IMR-90 (cell line): ENCODE measurements at regions of chr13 and their contacts with region 1.

Region 1: GRCh38 chr13:24220086-24220703 is 59.7 kb downstream of the SPATA13 start:
- DNase-seq: peak; percentile 88
- ATAC-seq: peak; percentile 82
- H3K4me3 ChIP-seq: no peak overlapping the region
- H3K27ac ChIP-seq: no peak overlapping the region
- H3K4me1 ChIP-seq: peaks cover 13% of the 10 kb centered on the region
- H3K27me3 ChIP-seq: no peaks in the 10 kb centered on the region
- CTCF ChIP-seq: peak; percentile 88
- POLR2A ChIP-seq: no peak
- RAD21 ChIP-seq: peak; percentile 95

Region 2: DNA sequence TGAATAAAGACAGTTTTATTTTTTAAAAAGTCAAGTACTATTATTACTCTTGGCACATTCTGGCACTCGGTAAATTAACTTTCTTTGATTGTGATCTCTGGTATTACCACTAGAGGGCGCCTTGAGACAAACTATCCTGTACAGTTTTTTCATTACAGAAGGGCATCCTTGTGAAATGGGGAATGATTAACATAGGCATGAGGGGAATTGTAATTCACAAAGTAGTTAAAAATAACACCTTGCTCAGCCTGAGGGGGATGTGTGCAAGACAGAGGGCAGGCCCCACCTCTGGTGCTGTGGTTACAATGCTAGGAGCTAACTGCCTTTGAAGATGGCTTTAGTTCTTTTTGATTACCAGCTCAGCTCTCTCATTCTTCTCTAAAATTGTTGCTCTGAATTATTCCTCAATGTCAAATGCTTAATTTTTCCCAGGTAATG is 298.7 kb before region 1 on chr13:
- CTCF ChIA-PET with region 1: no interaction called
- POLR2A ChIA-PET with region 1: no interaction called
- dilution Hi-C with region 1: no loop called
- in situ Hi-C with region 1: no loop called
- intact Hi-C with region 1: loop called (anchors 1 kb)
- DNase-seq: peak; percentile 66
- ATAC-seq: peak; percentile 61
- H3K4me3 ChIP-seq: no peak overlapping the region
- H3K27ac ChIP-seq: no peak overlapping the region
- H3K4me1 ChIP-seq: peaks cover 2% of the 10 kb centered on the region; the same call in 1 of the 2 replicates
- H3K27me3 ChIP-seq: no peaks in the 10 kb centered on the region
- CTCF ChIP-seq: peak; percentile 83
- POLR2A ChIP-seq: no peak
- RAD21 ChIP-seq: peak; percentile 86

Region 3: GRCh38 chr13:24005755-24006281 is 214.4 kb before region 1 on chr13:
- CTCF ChIA-PET with region 1: interaction called, 3 read pairs
- POLR2A ChIA-PET with region 1: interaction called, 14 read pairs
- dilution Hi-C with region 1: no loop called
- in situ Hi-C with region 1: no loop called
- intact Hi-C with region 1: no loop called
- DNase-seq: no peak
- ATAC-seq: peak; percentile 69
- H3K4me3 ChIP-seq: no peak overlapping the region
- H3K27ac ChIP-seq: no peak overlapping the region
- H3K4me1 ChIP-seq: peaks cover 12% of the 10 kb centered on the region
- H3K27me3 ChIP-seq: no peaks in the 10 kb centered on the region
- CTCF ChIP-seq: no peak
- POLR2A ChIP-seq: no peak
- RAD21 ChIP-seq: no peak

Region 4: GRCh38 chr13:24020375-24020830 is 199.8 kb before region 1 on chr13:
- CTCF ChIA-PET with region 1: interaction called, 8 read pairs
- POLR2A ChIA-PET with region 1: no interaction called
- dilution Hi-C with region 1: no loop called
- in situ Hi-C with region 1: loop called (anchors 5 kb)
- intact Hi-C with region 1: loop called (anchors 1 kb)
- DNase-seq: peak; percentile 76
- ATAC-seq: peak; percentile 92
- H3K4me3 ChIP-seq: no peak overlapping the region
- H3K27ac ChIP-seq: no peak overlapping the region
- H3K4me1 ChIP-seq: no peaks in the 10 kb centered on the region; the same call in 1 of the 2 replicates
- H3K27me3 ChIP-seq: no peaks in the 10 kb centered on the region
- CTCF ChIP-seq: peak; percentile 93
- POLR2A ChIP-seq: no peak
- RAD21 ChIP-seq: peak; percentile 89

Region 5: GRCh38 chr13:24053519-24054251 is 166.5 kb before region 1 on chr13:
- CTCF ChIA-PET with region 1: interaction called, 8 read pairs
- POLR2A ChIA-PET with region 1: no interaction called
- dilution Hi-C with region 1: no loop called
- in situ Hi-C with region 1: loop called (anchors 10 kb)
- intact Hi-C with region 1: loop called (anchors 1 kb)
- DNase-seq: peak; percentile 68
- ATAC-seq: peak; percentile 86
- H3K4me3 ChIP-seq: no peak overlapping the region
- H3K27ac ChIP-seq: no peak overlapping the region
- H3K4me1 ChIP-seq: peaks cover 14% of the 10 kb centered on the region
- H3K27me3 ChIP-seq: no peaks in the 10 kb centered on the region
- CTCF ChIP-seq: peak; percentile 70
- POLR2A ChIP-seq: no peak
- RAD21 ChIP-seq: peak; percentile 84

Region 6: GRCh38 chr13:24160454-24161009 is 59.7 kb before region 1 on chr13 and contains the start of gene SPATA13:
- CTCF ChIA-PET with region 1: no interaction called
- POLR2A ChIA-PET with region 1: no interaction called
- dilution Hi-C with region 1: no loop called
- in situ Hi-C with region 1: no loop called
- intact Hi-C with region 1: loop called (anchors 2 kb)
- DNase-seq: peak; percentile 84
- ATAC-seq: peak; percentile 93
- H3K4me3 ChIP-seq: peak within 1 kb of the TSS; percentile 94
- H3K27ac ChIP-seq: peak within 1 kb of the TSS; percentile 63
- H3K4me1 ChIP-seq: peaks cover 19% of the 10 kb centered on the region
- H3K27me3 ChIP-seq: no peaks in the 10 kb centered on the region
- CTCF ChIP-seq: no peak
- POLR2A ChIP-seq: peak; percentile 64; the same call in 1 of the 2 replicates
- RAD21 ChIP-seq: no peak
- total RNA-seq, gene SPATA13: 11.4 and 12.5 TPM in 2 replicates

Region 7: DNA sequence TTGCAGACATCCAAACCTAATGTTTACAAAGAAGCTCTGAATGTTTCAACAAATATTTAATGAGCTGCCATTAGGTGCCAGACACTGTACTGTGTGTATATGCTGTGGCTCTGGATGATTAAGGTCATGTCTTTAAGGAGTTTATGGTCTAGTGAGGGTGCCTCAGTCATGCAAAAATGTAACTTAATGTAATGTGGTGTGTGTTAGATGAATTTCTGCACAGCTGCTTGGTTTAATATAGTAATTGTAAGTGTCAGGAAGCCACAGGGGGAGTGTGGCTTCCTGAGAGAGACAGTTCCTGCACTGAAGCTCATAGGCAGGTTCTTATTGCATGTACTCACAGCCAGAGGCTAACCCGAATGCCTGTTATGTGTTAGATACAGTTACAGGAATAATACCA is 16.4 kb before region 1 on chr13:
- CTCF ChIA-PET with region 1: interaction called, 17 read pairs
- POLR2A ChIA-PET with region 1: no interaction called
- dilution Hi-C with region 1: no loop called
- in situ Hi-C with region 1: no loop called
- intact Hi-C with region 1: no loop called
- DNase-seq: peak; percentile 50
- ATAC-seq: peak; percentile 79
- H3K4me3 ChIP-seq: no peak overlapping the region
- H3K27ac ChIP-seq: no peak overlapping the region
- H3K4me1 ChIP-seq: peaks cover 4% of the 10 kb centered on the region
- H3K27me3 ChIP-seq: no peaks in the 10 kb centered on the region
- CTCF ChIP-seq: no peak
- POLR2A ChIP-seq: no peak
- RAD21 ChIP-seq: no peak

Region 8: GRCh38 chr13:24355103-24355502 is 134.9 kb after region 1 on chr13:
- CTCF ChIA-PET with region 1: no interaction called
- POLR2A ChIA-PET with region 1: no interaction called
- dilution Hi-C with region 1: no loop called
- in situ Hi-C with region 1: no loop called
- intact Hi-C with region 1: no loop called
- DNase-seq: no peak
- ATAC-seq: no peak
- H3K4me3 ChIP-seq: no peak overlapping the region
- H3K27ac ChIP-seq: no peak overlapping the region
- H3K4me1 ChIP-seq: no peaks in the 10 kb centered on the region
- H3K27me3 ChIP-seq: peaks cover 5% of the 10 kb centered on the region; the same call in 1 of the 2 replicates
- CTCF ChIP-seq: no peak
- POLR2A ChIP-seq: no peak
- RAD21 ChIP-seq: no peak